Activated naive CD4-positive, alpha-beta T cell treated with anti-CD3 and anti-CD28 coated beads for 36 hours (primary cell): ENCODE measurements at regions of chr9 and their contacts with region 1.

Region 1: GRCh38 chr9:35116898-35117551 is 1.4 kb upstream of the ATOSB start:
- DNase-seq: peak; percentile 94
- H3K4me3 Mint-ChIP-seq: peak overlapping the region; percentile 89
- H3K27ac Mint-ChIP-seq: peak overlapping the region; percentile 80
- H3K4me1 Mint-ChIP-seq: peaks cover 38% of the 10 kb centered on the region
- H3K27me3 Mint-ChIP-seq: no peaks in the 10 kb centered on the region

Region 2: DNA sequence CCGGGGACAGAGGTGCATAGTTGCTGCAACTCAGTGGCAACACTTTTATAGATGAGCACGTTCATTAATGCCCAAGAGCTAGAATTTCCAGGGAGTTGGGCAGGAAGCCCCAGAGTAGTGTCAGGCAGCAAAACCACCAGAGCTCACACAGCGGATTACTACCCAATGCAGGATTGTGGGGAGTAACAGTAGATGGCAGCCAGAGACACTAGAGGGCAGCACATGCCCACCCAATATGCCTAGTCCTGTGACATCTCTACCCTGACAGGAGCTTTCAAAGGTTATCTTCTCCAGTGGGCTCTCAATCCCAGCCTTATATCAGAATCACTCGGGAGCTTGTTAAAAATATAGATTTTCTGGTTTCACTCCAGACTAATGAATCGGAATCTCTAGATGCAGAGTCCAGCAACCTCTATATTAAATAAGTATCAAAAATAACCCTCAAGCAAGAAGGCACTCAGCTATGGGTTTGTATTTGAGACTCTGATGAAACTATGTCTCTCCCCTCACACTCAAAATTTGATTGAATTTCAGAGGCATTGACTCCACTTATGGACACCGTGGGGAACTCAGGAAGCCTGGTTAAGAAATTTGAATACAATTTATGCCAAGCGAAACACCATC is 217.4 kb before region 1 on chr9:
- CTCF ChIA-PET with region 1: interaction called, 5 read pairs
- intact Hi-C with region 1: loop called (anchors 1 kb)
- DNase-seq: peak; percentile 91
- H3K4me3 Mint-ChIP-seq: no peak overlapping the region
- H3K27ac Mint-ChIP-seq: no peak overlapping the region
- H3K4me1 Mint-ChIP-seq: no peaks in the 10 kb centered on the region
- H3K27me3 Mint-ChIP-seq: peaks cover 22% of the 10 kb centered on the region

Region 3: GRCh38 chr9:35258676-35259474 is 141.8 kb after region 1 on chr9:
- CTCF ChIA-PET with region 1: interaction called, 18 read pairs
- intact Hi-C with region 1: loop called (anchors 1 kb)
- DNase-seq: peak; percentile 68
- H3K4me3 Mint-ChIP-seq: no peak overlapping the region
- H3K27ac Mint-ChIP-seq: no peak overlapping the region
- H3K4me1 Mint-ChIP-seq: no peaks in the 10 kb centered on the region
- H3K27me3 Mint-ChIP-seq: no peaks in the 10 kb centered on the region

Region 4: GRCh38 chr9:35470894-35471293 is 353.9 kb after region 1 on chr9:
- CTCF ChIA-PET with region 1: interaction called, 21 read pairs
- intact Hi-C with region 1: no loop called
- DNase-seq: no peak
- H3K4me3 Mint-ChIP-seq: no peak overlapping the region
- H3K27ac Mint-ChIP-seq: no peak overlapping the region
- H3K4me1 Mint-ChIP-seq: no peaks in the 10 kb centered on the region
- H3K27me3 Mint-ChIP-seq: peaks cover 8% of the 10 kb centered on the region

Region 5: GRCh38 chr9:35646533-35647265 is 529.7 kb after region 1 on chr9:
- CTCF ChIA-PET with region 1: no interaction called
- intact Hi-C with region 1: loop called (anchors 1 kb)
- DNase-seq: peak; percentile 94
- H3K4me3 Mint-ChIP-seq: peak overlapping the region; percentile 90
- H3K27ac Mint-ChIP-seq: peak overlapping the region; percentile 83
- H3K4me1 Mint-ChIP-seq: peaks cover 43% of the 10 kb centered on the region
- H3K27me3 Mint-ChIP-seq: no peaks in the 10 kb centered on the region